Activated T-helper 2 cell treated with anti-CD3 and anti-CD28 coated beads, Interferon-gamma antibody, Interleukin-2, Interleukin-4, amounts not matched to agents 10 μg/mL and 5 μg/mL and 100 μg/mL, durations not matched to agents 14 hours and 24 hours and 36 hours (primary cell): ENCODE measurements at regions of chr22 and their contacts with region 1.

Region 1: GRCh38 chr22:23838681-23839468 is at the start of gene DERL3:
- DNase-seq: peak; percentile 99
- H3K4me3 Mint-ChIP-seq: peak within 1 kb of the TSS; percentile 95
- H3K27ac Mint-ChIP-seq: peak within 1 kb of the TSS; percentile 91
- H3K4me1 Mint-ChIP-seq: peaks cover 17% of the 10 kb centered on the region
- H3K27me3 Mint-ChIP-seq: peaks cover 2% of the 10 kb centered on the region
- total RNA-seq, gene DERL3: 10.3 TPM in 2 replicates

Region 2: DNA sequence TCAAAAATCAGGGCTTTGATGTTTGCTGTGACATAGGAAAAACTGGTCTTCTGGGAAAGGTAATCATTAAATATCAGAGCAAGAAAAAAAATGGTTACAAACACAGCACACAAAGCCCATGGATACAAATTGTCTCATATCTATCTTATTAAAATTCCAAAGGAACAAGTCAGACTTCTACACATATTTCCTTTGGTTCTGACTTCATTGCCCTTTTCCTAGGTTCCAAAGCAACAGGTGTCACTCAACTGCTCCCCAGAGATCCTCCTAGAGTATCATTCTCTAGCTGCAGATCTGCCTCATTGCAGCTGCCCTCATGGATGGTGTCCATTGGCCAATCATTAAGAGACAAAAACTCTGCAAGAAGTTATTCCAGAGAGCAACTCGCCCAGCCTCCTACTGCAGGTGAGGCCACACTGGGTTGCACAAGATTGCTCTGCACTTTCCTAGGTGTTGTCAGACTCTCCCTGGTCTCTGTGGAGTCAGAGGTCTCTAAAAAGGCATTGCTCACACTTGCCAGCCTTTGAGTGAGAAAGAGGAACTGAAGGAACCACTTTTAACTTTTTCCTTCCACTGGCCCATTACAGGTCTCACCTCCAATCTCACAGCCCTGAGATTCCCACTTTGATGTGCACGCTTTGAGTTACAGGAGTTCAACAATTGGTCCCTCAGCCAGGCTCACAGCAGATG is 212.4 kb before region 1 on chr22:
- intact Hi-C with region 1: loop called (anchors 5 kb)
- DNase-seq: no peak
- H3K4me3 Mint-ChIP-seq: no peak overlapping the region
- H3K27ac Mint-ChIP-seq: no peak overlapping the region
- H3K4me1 Mint-ChIP-seq: peaks cover 2% of the 10 kb centered on the region
- H3K27me3 Mint-ChIP-seq: no peaks in the 10 kb centered on the region

Region 3: GRCh38 chr22:23638601-23639000 is 200.3 kb before region 1 on chr22:
- intact Hi-C with region 1: no loop called
- DNase-seq: no peak
- H3K4me3 Mint-ChIP-seq: no peak overlapping the region
- H3K27ac Mint-ChIP-seq: no peak overlapping the region
- H3K4me1 Mint-ChIP-seq: no peaks in the 10 kb centered on the region
- H3K27me3 Mint-ChIP-seq: no peaks in the 10 kb centered on the region

Region 4: DNA sequence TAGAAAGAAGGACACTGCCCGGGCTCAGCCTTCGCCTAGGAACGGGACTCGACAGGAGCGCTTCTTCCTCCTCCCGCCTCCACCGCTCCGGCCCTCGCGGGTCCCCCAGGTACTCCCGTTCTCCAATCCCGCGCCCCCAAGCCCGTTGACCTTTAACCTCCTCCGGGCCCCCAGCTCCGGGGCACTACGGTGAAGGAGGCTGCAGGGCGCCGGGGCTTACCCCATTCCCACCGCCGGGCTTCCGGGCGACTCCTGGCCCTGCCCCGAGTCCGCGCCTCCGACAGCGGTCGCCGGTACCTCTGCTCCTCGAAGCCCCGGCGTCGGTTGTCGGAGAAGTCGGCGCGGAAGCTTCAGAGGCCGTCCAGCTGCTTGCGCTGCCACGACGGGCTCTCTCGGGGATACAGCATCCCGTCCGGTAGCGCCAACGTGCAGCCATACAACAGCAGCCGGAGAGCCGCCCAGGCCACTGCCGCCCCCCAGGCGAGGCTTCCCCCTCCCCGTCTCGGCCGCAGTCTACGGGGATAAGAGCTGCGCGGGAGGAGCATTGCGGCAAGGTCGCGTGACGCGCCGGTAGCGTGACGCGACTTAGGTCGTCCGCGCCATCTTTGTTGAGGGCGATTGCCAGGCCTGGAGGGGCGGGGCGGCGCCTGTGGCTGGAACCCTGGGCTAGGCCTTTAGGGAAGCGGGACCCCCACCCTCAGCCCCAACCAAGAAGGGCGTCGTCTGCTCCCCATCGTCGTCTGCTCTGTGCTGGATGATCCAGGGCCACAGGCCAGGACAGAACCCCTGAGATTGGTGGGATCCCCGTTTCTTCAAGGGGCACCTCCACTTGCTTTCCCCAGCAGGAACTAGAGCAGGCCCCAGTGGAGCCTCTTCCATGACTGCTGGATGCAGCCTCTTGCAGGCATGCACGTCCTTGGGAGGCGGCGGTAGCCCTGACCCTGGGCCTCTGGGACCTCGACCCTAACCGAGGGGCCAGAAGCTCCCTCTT is 121.8 kb before region 1 on chr22:
- intact Hi-C with region 1: loop called (anchors 5 kb)
- DNase-seq: peak; percentile 77
- H3K4me3 Mint-ChIP-seq: peak overlapping the region; percentile 75
- H3K27ac Mint-ChIP-seq: peak overlapping the region; percentile 78
- H3K4me1 Mint-ChIP-seq: peaks cover 12% of the 10 kb centered on the region
- H3K27me3 Mint-ChIP-seq: no peaks in the 10 kb centered on the region

Region 5: GRCh38 chr22:23786752-23787599 is 51.9 kb before region 1 on chr22 and contains the start of gene SMARCB1:
- intact Hi-C with region 1: loop called (anchors 2 kb)
- DNase-seq: peak; percentile 82
- H3K4me3 Mint-ChIP-seq: peak within 1 kb of the TSS; percentile 89
- H3K27ac Mint-ChIP-seq: peak within 1 kb of the TSS; percentile 92
- H3K4me1 Mint-ChIP-seq: peaks cover 26% of the 10 kb centered on the region
- H3K27me3 Mint-ChIP-seq: no peaks in the 10 kb centered on the region
- total RNA-seq, gene SMARCB1: 94.1 and 96.4 TPM in 2 replicates

Region 6: DNA sequence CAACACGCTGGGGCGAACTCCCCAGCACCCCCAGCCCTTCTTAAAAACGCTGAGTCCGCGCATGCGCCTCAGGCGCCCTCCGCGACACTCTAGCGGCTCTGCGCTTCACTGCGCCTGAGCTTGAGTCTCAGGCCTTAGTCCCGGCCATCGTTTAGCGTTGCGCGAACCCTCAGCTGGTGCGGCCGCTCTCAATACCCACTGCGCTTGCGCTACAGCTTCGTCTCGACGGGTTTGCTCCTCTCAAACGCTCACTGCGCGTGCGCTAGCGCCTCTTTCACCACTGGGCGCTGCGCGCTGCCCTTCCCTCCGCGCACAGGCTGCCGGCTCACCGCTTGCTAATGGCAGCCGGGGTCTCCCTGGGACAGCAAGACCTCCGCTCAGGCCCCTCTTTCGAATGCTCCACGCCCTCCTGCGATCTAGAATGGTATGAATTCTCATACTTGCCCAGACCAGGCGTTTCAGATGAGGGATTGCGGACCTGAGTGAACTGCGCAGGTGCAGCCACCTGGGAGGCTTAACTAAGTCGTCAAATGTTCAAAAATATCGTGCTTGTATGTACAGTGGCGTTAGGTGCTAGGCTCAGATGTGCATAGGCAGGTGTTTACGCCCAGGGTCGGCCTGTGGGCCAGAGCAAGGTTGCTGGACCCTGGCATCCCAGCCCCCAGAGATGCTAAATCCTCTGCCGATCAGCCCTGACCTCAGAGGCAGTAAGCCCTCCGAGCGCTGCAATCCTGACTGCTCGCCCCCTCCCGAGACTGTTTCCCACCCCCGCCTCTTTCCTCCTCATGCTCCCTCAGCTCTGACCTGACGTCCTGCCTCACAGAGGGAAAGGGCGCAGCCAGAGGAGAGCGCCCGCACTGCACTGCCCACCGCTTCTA is 19.0 kb after region 1 on chr22 and contains the start of gene SLC2A11:
- intact Hi-C with region 1: loop called (anchors 2 kb)
- DNase-seq: peak; percentile 94
- H3K4me3 Mint-ChIP-seq: peak within 1 kb of the TSS; percentile 87
- H3K27ac Mint-ChIP-seq: peak within 1 kb of the TSS; percentile 86
- H3K4me1 Mint-ChIP-seq: peaks cover 16% of the 10 kb centered on the region
- H3K27me3 Mint-ChIP-seq: peaks cover 5% of the 10 kb centered on the region
- total RNA-seq, gene SLC2A11: 9.4 and 9.6 TPM in 2 replicates